Vagina (tissue), 2 donors: ENCODE measurements at regions of chr5 and their contacts with region 1.

Region 1: DNA sequence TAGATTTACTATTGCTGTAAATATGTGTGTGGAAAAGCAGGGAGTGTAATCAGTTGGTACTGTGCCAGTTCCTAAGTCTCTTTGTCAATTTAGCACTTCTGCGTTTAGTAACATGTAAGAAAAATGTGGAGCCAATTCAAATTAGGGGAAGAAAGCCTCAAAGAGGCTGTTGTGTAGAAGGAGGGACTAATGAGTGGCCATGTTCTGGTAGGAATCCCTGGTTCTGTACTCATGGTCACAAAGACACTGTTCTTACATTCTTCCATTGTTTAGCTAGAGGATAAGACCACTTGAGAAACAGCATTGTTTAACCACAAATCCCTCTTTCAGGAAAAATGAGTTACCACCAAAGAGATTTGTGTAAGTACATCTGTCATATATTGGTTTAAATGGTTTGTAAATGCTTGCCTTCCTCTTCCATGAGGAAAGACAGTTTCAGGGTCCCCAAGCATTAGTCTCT is 14.9 kb downstream of the ARHGEF28 start:
- DNase-seq: no peak
- H3K4me3 ChIP-seq: no peak overlapping the region
- H3K27ac ChIP-seq: no peak overlapping the region
- H3K4me1 ChIP-seq: no peaks in the 10 kb centered on the region
- H3K27me3 ChIP-seq: no peaks in the 10 kb centered on the region
- CTCF ChIP-seq: no peak
- POLR2A ChIP-seq: no peak

Region 2: GRCh38 chr5:73519531-73520283 is 121.2 kb before region 1 on chr5:
- intact Hi-C with region 1: no loop called
- DNase-seq: no peak
- H3K4me3 ChIP-seq: no peak overlapping the region
- H3K27ac ChIP-seq: no peak overlapping the region
- H3K4me1 ChIP-seq: no peaks in the 10 kb centered on the region
- H3K27me3 ChIP-seq: no peaks in the 10 kb centered on the region
- CTCF ChIP-seq: peak; percentile 41 to 67 (median 57)
- POLR2A ChIP-seq: no peak

Region 3: DNA sequence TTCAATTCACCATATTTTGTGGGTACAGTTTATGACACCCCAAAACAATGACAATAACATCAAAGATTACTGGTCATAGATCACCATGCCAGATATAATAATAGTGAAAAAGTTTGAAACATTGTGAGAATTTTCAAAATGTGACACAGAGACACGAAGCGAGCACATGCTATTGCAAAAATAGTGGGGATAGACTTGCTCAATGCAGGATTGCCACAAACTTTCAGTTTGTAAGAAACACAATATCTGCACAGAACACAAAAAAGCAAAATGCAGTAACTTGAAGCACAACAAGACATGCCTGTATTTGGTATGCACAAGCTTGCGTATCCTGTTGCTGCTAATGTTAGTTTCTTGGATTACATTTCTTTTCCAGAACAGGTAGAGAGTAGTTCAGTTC is 20.9 kb after region 1 on chr5:
- intact Hi-C with region 1: loop called (anchors 1 kb)
- DNase-seq: no peak
- H3K4me3 ChIP-seq: no peak overlapping the region
- H3K27ac ChIP-seq: no peak overlapping the region
- H3K4me1 ChIP-seq: no peaks in the 10 kb centered on the region
- H3K27me3 ChIP-seq: no peaks in the 10 kb centered on the region
- CTCF ChIP-seq: no peak
- POLR2A ChIP-seq: no peak